Mammary epithelial cell (primary cell): ENCODE measurements at regions of chr21 and their contacts with region 1.

Region 1: GRCh38 chr21:19130379-19131028 is 726.9 kb upstream of the TMPRSS15 start:
- DNase-seq: no peak
- H3K4me3 ChIP-seq: no peak overlapping the region
- H3K27ac ChIP-seq: no peak overlapping the region
- H3K4me1 ChIP-seq: no peaks in the 10 kb centered on the region
- H3K27me3 ChIP-seq: no peaks in the 10 kb centered on the region
- CTCF ChIP-seq: no peak

Region 2: GRCh38 chr21:19076031-19076430 is 54.5 kb before region 1 on chr21:
- CTCF ChIA-PET with region 1: no interaction called
- dilution Hi-C with region 1: loop called (anchors 5 kb)
- in situ Hi-C with region 1: no loop called
- intact Hi-C with region 1: no loop called
- DNase-seq: no peak
- H3K4me3 ChIP-seq: no peak overlapping the region
- H3K27ac ChIP-seq: no peak overlapping the region
- H3K4me1 ChIP-seq: no peaks in the 10 kb centered on the region
- H3K27me3 ChIP-seq: no peaks in the 10 kb centered on the region
- CTCF ChIP-seq: no peak